ENCODE measurements at regions of chr3 and their contacts with region 1.

Region 1: DNA sequence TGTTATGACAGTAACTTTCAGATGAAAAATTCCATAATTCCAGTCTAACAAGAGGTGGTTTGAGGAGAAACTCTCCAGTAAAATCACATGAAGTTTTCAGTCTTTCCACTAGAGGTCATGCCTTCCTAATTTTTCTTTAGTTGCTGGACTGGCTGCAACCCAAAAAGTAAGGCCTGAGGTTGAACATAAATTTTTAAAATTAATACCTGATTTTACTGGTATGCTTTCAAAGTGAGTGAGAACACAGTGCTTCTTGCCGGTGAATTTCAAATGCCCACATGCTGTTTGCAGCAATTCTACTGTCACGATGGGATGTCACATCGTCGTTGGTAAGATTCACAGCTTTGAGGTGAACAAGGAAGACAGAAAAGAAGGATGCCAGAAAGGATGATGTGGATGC is 89.0 kb upstream of the FGF12 start:
- DNase-seq: no peak
- ATAC-seq: no peak
- H3K4me3 Mint-ChIP-seq: no peak overlapping the region
- H3K27ac Mint-ChIP-seq: no peak overlapping the region
- H3K4me1 Mint-ChIP-seq: peaks cover 20% of the 10 kb centered on the region
- H3K27me3 Mint-ChIP-seq: peaks cover 11% of the 10 kb centered on the region

Region 2: GRCh38 chr3:192687488-192688152 is 128.7 kb before region 1 on chr3:
- CTCF ChIA-PET with region 1: no interaction called
- POLR2A ChIA-PET with region 1: no interaction called
- intact Hi-C with region 1: no loop called
- DNase-seq: no peak
- ATAC-seq: no peak
- H3K4me3 Mint-ChIP-seq: no peak overlapping the region
- H3K27ac Mint-ChIP-seq: no peak overlapping the region
- H3K4me1 Mint-ChIP-seq: no peaks in the 10 kb centered on the region
- H3K27me3 Mint-ChIP-seq: peaks cover 4% of the 10 kb centered on the region

Region 3: GRCh38 chr3:192802957-192803899 is 13.1 kb before region 1 on chr3:
- CTCF ChIA-PET with region 1: interaction called, 18 read pairs
- POLR2A ChIA-PET with region 1: no interaction called
- intact Hi-C with region 1: no loop called
- DNase-seq: no peak
- ATAC-seq: peak; percentile 36
- H3K4me3 Mint-ChIP-seq: no peak overlapping the region
- H3K27ac Mint-ChIP-seq: no peak overlapping the region
- H3K4me1 Mint-ChIP-seq: no peaks in the 10 kb centered on the region
- H3K27me3 Mint-ChIP-seq: peaks cover 2% of the 10 kb centered on the region

Region 4: DNA sequence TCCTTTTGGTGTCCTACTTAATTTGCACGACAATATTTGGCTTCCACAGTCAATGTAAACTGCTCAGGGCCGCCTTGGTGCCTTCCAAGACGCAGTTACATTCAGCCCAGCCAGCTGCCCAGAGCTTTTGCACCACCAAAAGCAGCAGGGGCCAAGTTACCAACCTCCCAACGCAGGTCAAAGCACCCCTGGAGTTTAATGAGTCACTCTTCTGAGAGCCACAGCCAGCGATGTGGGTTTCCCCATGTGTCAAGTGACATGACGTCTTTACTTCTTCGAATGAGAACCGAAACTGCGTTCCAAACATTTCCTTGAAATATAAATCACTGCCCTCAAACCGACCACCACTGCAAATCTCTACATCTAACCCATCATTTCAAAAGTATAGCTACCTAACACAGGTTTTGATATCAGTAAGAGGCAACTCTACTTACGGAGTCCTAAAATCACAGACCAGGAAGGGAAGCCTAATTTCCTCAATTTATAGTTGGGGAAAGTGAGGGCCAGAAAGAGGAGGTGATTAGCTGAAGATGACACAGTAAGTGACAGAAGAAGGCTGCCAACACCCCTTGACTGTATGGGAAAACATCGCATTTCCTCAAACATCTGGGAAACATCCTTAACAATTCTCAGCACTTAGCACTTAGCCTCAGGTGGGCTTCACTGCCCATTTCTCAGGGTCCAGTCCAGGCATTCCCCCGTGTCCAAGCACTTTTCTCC is 76.8 kb after region 1 on chr3:
- CTCF ChIA-PET with region 1: interaction called, 4 read pairs
- POLR2A ChIA-PET with region 1: interaction called, 3 read pairs
- intact Hi-C with region 1: loop called (anchors 2 kb)
- DNase-seq: peak; percentile 81
- ATAC-seq: peak; percentile 94
- H3K4me3 Mint-ChIP-seq: no peak overlapping the region
- H3K27ac Mint-ChIP-seq: peak overlapping the region; percentile 32
- H3K4me1 Mint-ChIP-seq: peaks cover 31% of the 10 kb centered on the region
- H3K27me3 Mint-ChIP-seq: peaks cover 20% of the 10 kb centered on the region

Region 5: GRCh38 chr3:193040836-193041672 is 224.7 kb after region 1 on chr3:
- CTCF ChIA-PET with region 1: interaction called, 87 read pairs
- POLR2A ChIA-PET with region 1: no interaction called
- intact Hi-C with region 1: loop called (anchors 1 kb)
- DNase-seq: no peak
- ATAC-seq: no peak
- H3K4me3 Mint-ChIP-seq: no peak overlapping the region
- H3K27ac Mint-ChIP-seq: no peak overlapping the region
- H3K4me1 Mint-ChIP-seq: no peaks in the 10 kb centered on the region
- H3K27me3 Mint-ChIP-seq: no peaks in the 10 kb centered on the region

Region 6: DNA sequence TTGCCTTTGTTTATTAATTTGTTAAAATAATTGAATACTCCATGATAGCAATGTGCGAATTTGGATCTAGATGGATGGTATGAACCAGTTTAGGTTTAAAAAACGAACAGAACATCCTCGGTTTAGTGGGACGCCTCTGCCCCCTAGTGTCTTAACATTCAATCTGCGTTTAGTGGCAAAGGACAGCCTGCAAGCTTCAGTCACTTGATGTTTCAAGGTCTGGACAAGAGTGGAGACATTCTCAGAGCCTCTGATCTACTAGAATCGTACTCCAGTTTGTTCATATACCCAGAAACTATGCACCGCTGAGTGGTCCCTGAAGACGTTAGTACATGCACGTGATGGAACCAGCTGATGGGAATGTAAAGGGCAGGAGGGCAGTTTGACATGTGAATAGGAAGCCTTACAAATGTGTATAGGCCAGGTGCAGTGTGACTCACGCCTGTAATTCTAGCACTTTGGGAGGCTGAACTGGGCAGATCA is 756.1 kb after region 1 on chr3:
- CTCF ChIA-PET with region 1: interaction called, 20 read pairs
- POLR2A ChIA-PET with region 1: no interaction called
- intact Hi-C with region 1: loop called (anchors 2 to 5 kb)
- DNase-seq: peak; percentile 68
- ATAC-seq: peak; percentile 84
- H3K4me3 Mint-ChIP-seq: no peak overlapping the region
- H3K27ac Mint-ChIP-seq: no peak overlapping the region
- H3K4me1 Mint-ChIP-seq: no peaks in the 10 kb centered on the region
- H3K27me3 Mint-ChIP-seq: no peaks in the 10 kb centered on the region